CD14-positive monocyte (primary cell): ENCODE measurements at regions of chr6 and their contacts with region 1.

Region 1: DNA sequence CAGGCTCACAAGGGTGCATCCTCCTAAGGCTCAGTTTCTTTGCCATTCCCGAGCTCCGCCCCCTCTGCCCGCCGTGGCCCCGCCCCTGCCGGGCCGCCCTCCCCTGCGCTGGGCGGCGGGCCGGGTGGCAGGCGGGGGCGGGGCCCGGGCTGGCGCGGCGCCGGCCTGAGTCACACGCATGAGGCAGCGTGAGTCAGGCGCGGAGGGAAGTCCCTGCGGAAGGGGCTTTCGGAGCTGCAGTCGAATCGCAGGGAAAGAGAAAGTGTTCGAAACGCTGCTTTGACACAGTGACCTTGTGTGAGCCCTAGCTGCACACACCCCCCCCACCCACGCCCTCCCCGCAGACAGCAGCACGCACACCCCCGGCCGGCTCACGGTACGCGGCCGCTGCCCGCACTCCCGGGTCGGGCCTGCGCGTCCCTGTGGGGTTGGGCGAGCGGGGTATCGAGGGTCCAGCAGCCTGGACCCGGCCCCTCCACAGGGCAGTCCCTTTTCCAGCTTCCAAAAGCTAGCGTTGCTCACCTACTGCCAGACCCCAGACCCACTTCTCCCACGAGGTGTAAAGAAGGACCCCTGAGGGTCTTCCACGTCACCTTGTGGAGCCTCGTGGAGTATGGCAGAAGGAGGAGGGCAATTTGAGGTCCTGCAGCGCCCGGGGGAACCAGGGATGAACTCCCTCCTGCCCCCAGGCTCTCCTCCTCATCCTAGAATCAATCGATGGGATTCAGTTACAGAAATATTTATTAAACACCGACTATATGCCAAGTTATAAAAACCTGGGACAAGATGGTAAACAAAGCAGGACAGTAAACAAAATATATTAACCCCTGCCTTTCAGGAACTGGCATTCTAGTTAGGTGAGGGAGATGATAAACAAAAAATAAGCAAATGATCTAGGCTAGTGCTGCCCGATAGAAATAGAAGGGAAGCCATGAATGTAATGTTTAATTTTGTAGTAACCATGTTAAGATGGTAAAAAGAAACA is 12.4 kb upstream of the HMGA1 start:
- DNase-seq: peak; percentile 99 to 100 (median 99)
- H3K4me3 ChIP-seq: peak overlapping the region; percentile 43 to 65 (median 51)
- H3K4me3 Mint-ChIP-seq: peak overlapping the region; percentile 67 to 69
- H3K27ac ChIP-seq: peak overlapping the region; percentile 98 to 99
- H3K27ac Mint-ChIP-seq: peak overlapping the region; percentile 91 to 97 (median 95)
- H3K4me1 ChIP-seq: peaks cover 28 to 32% of the 10 kb centered on the region in 2 donors
- H3K4me1 Mint-ChIP-seq: peaks cover 51% of the 10 kb centered on the region
- H3K27me3 ChIP-seq: no peaks in the 10 kb centered on the region
- H3K27me3 Mint-ChIP-seq: peaks cover 0 to 7% (median 5%) of the 10 kb centered on the region in 3 donors
- CTCF ChIP-seq: no peak

Region 2: GRCh38 chr6:34236131-34236996 is 12.1 kb after region 1 on chr6 and contains the start of gene HMGA1:
- intact Hi-C with region 1: loop called in 1 of 2 experiments (anchors 1 kb)
- DNase-seq: peak; percentile 86 to 93 (median 90)
- H3K4me3 ChIP-seq: peak within 1 kb of the TSS; percentile 54 to 90 (median 79)
- H3K4me3 Mint-ChIP-seq: peak within 1 kb of the TSS; percentile 84 to 87
- H3K27ac ChIP-seq: peak within 1 kb of the TSS; percentile 86 to 97
- H3K27ac Mint-ChIP-seq: peak within 1 kb of the TSS; percentile 90 to 97 (median 95)
- H3K4me1 ChIP-seq: peaks cover 16 to 32% of the 10 kb centered on the region in 2 donors
- H3K4me1 Mint-ChIP-seq: peaks cover 24% of the 10 kb centered on the region
- H3K27me3 ChIP-seq: no peaks in the 10 kb centered on the region
- H3K27me3 Mint-ChIP-seq: peaks cover 0 to 2% (median 1%) of the 10 kb centered on the region in 3 donors
- CTCF ChIP-seq: no peak
- polyA plus RNA-seq, gene HMGA1: 11.4 to 37.9 (median 17.6) TPM